Heart right ventricle (tissue), 16 donors: ENCODE measurements at regions of chr2 and their contacts with region 1.

Region 1: DNA sequence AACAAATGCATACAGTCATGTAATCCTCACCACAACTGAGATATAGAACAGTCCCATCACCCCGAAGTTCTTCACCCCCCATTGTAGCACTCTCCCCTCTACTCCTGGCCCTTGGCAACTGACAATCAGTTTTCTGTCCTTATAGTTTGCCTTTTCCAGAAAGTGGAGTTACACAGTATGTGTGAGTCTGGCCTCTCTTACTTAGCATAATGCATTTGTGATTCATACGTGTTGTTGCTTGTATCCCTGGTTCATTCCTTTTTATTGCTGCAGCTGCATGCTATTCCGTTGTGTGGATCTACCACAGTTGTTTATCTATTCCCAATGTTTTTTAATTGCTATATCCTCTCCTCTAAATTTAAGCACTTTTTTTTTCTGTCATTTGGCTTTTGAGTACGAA is 17.6 kb downstream of the ACYP2 start:
- DNase-seq: no peak
- ATAC-seq: no peak
- H3K4me3 ChIP-seq: no peak overlapping the region
- H3K27ac ChIP-seq: no peak overlapping the region
- H3K4me1 ChIP-seq: no peaks in the 10 kb centered on the region
- H3K27me3 ChIP-seq: no peaks in the 10 kb centered on the region
- CTCF ChIP-seq: no peak

Region 2: GRCh38 chr2:55232084-55232862 is 1099.2 kb after region 1 on chr2 and contains the starts of genes CLHC1 and RPS27A:
- intact Hi-C with region 1: no loop called
- DNase-seq: peak; percentile 93 to 94
- ATAC-seq: peak; percentile 93 to 98 (median 96)
- H3K4me3 ChIP-seq: peak within 1 kb of the TSS; percentile 62 to 98 (median 88)
- H3K27ac ChIP-seq: peak within 1 kb of the TSS; percentile 80 to 98 (median 94)
- H3K4me1 ChIP-seq: peaks cover 0 to 49% (median 43%) of the 10 kb centered on the region in 9 donors
- H3K27me3 ChIP-seq: no peaks in the 10 kb centered on the region
- CTCF ChIP-seq: peak in 1 of 9 donors; percentile 2
- total RNA-seq, gene CLHC1: 4.0 to 9.0 (median 6.3) TPM
- total RNA-seq, gene RPS27A: 365 to 520 (median 408) TPM

Region 3: GRCh38 chr2:55327470-55328230 is 1194.6 kb after region 1 on chr2:
- intact Hi-C with region 1: loop called in 1 of 10 experiments (anchors 5 kb)
- DNase-seq: no peak
- ATAC-seq: no peak
- H3K4me3 ChIP-seq: no peak overlapping the region
- H3K27ac ChIP-seq: no peak overlapping the region
- H3K4me1 ChIP-seq: no peaks in the 10 kb centered on the region
- H3K27me3 ChIP-seq: no peaks in the 10 kb centered on the region
- CTCF ChIP-seq: no peak